Activated CD8-positive, alpha-beta memory T cell treated with anti-CD3 and anti-CD28 coated beads, Interleukin-2, amount 10 ng/mL, durations not matched to agents 7 days and 5 days (primary cell): ENCODE measurements at regions of chr6 and their contacts with region 1.

Region 1: GRCh38 chr6:127918506-127919427 is 17.9 kb upstream of the THEMIS start:
- DNase-seq: no peak
- ATAC-seq: peak; percentile 65
- H3K4me3 Mint-ChIP-seq: peak overlapping the region; percentile 70
- H3K27ac Mint-ChIP-seq: peak overlapping the region; percentile 77
- H3K4me1 Mint-ChIP-seq: peaks cover 84% of the 10 kb centered on the region
- H3K27me3 Mint-ChIP-seq: no peaks in the 10 kb centered on the region

Region 2: GRCh38 chr6:127907960-127908640 is 10.7 kb before region 1 on chr6:
- CTCF ChIA-PET with region 1: interaction called, 21 read pairs
- DNase-seq: peak; percentile 67
- ATAC-seq: peak; percentile 73
- H3K4me3 Mint-ChIP-seq: peak overlapping the region; percentile 85
- H3K27ac Mint-ChIP-seq: peak overlapping the region; percentile 96
- H3K4me1 Mint-ChIP-seq: peaks cover 63% of the 10 kb centered on the region
- H3K27me3 Mint-ChIP-seq: no peaks in the 10 kb centered on the region

Region 3: GRCh38 chr6:128036808-128037570 is 118.2 kb after region 1 on chr6:
- CTCF ChIA-PET with region 1: no interaction called
- DNase-seq: no peak
- ATAC-seq: no peak
- H3K4me3 Mint-ChIP-seq: no peak overlapping the region
- H3K27ac Mint-ChIP-seq: no peak overlapping the region
- H3K4me1 Mint-ChIP-seq: peaks cover 3% of the 10 kb centered on the region
- H3K27me3 Mint-ChIP-seq: no peaks in the 10 kb centered on the region